ENCODE measurements at regions of chr11 and their contacts with region 1.

Region 1: DNA sequence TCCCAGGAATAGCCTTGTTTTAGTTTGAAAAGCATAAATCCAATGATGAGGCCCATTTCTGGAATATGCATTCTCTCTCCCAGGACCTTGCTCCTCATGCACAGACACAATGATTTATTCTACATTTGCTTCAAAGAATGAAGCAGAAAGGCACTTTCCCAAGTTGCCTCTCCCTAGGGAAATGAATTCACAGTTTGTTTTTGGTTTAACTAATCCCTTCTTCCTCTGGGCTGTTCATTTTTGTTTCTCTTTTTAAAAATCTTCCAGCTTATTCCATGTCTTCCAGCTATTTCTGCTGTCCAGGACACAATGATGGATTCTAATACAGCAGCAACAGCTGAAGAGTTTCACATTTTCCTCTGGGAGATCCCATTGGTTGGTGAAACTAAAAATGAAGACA is 1529.2 kb upstream of the TENM4 start:
- DNase-seq: no peak

Region 2: GRCh38 chr11:80505771-80506170 is 464.3 kb before region 1 on chr11:
- intact Hi-C with region 1: loop called in 1 of 2 experiments (anchors 5 kb)
- DNase-seq: no peak